GM12878 (cell line): ENCODE measurements at regions of chr1 and their contacts with region 1.

Region 1: GRCh38 chr1:205485338-205486228 is 18.9 kb upstream of the CDK18 start:
- DNase-seq: no peak
- ATAC-seq: peak; percentile 65
- H3K4me3 ChIP-seq: no peak overlapping the region
- H3K27ac ChIP-seq: no peak overlapping the region
- H3K4me1 ChIP-seq: peaks cover 14% of the 10 kb centered on the region
- H3K27me3 ChIP-seq: 0 out of 4 replicates have a peak, but pooled peaks cover 0 to 1% of the 10 kb centered on the region in 2 experiments
- CTCF ChIP-seq: peak; percentile 94 to 97 (median 96); a peak in 5 of 6 replicates
- EP300 ChIP-seq: no peak
- POLR2A ChIP-seq: no peak
- RAD21 ChIP-seq: peak; percentile 98

Region 2: GRCh38 chr1:205335643-205336091 is 149.9 kb before region 1 on chr1:
- CTCF ChIA-PET with region 1: interaction called, 102 read pairs
- POLR2A ChIA-PET with region 1: no interaction called
- RAD21 ChIA-PET with region 1: interaction called, 16 read pairs
- SMC1A ChIA-PET with region 1: interaction called, 39 read pairs
- in situ Hi-C with region 1: no loop called
- intact Hi-C with region 1: loop called (anchors 1 kb)
- DNase-seq: no peak
- ATAC-seq: peak; percentile 87
- H3K4me3 ChIP-seq: no peak overlapping the region
- H3K27ac ChIP-seq: no peak overlapping the region
- H3K4me1 ChIP-seq: peaks cover 6% of the 10 kb centered on the region; the same call in 1 of the 2 replicates
- H3K27me3 ChIP-seq: peaks cover 7 to 18% of the 10 kb centered on the region in 2 experiments
- CTCF ChIP-seq: peak; percentile 98 to 99 (median 99); a peak in 5 of 6 replicates
- EP300 ChIP-seq: no peak
- POLR2A ChIP-seq: no peak
- RAD21 ChIP-seq: peak; percentile 69

Region 3: GRCh38 chr1:205396967-205397616 is 88.5 kb before region 1 on chr1:
- CTCF ChIA-PET with region 1: interaction called, 420 read pairs
- POLR2A ChIA-PET with region 1: interaction called, 7 read pairs
- RAD21 ChIA-PET with region 1: interaction called, 214 read pairs
- SMC1A ChIA-PET with region 1: interaction called, 244 read pairs
- in situ Hi-C with region 1: loop called (anchors 5 kb)
- intact Hi-C with region 1: loop called (anchors 1 kb)
- DNase-seq: peak; percentile 8
- ATAC-seq: peak; percentile 65
- H3K4me3 ChIP-seq: no peak overlapping the region
- H3K27ac ChIP-seq: no peak overlapping the region
- H3K4me1 ChIP-seq: no peaks in the 10 kb centered on the region
- H3K27me3 ChIP-seq: no peaks in the 10 kb centered on the region
- CTCF ChIP-seq: peak; percentile 62 to 65 (median 65)
- EP300 ChIP-seq: no peak
- POLR2A ChIP-seq: no peak
- RAD21 ChIP-seq: peak; percentile 85

Region 4: GRCh38 chr1:205430696-205431305 is 54.8 kb before region 1 on chr1:
- CTCF ChIA-PET with region 1: interaction called, 191 read pairs
- POLR2A ChIA-PET with region 1: no interaction called
- RAD21 ChIA-PET with region 1: interaction called, 39 read pairs
- SMC1A ChIA-PET with region 1: interaction called, 21 read pairs
- in situ Hi-C with region 1: no loop called
- intact Hi-C with region 1: no loop called
- DNase-seq: peak; percentile 13
- ATAC-seq: peak; percentile 85
- H3K4me3 ChIP-seq: peak overlapping the region; percentile 54; the same call in 1 of the 2 replicates
- H3K27ac ChIP-seq: no peak overlapping the region
- H3K4me1 ChIP-seq: peaks cover 3% of the 10 kb centered on the region
- H3K27me3 ChIP-seq: peaks cover 3 to 4% of the 10 kb centered on the region in 2 experiments; a peak in 2 of 4 replicates
- CTCF ChIP-seq: peak; percentile 53 to 85 (median 72)
- EP300 ChIP-seq: peak in 1 of 2 experiments; percentile 38; a peak in 1 of 4 replicates
- POLR2A ChIP-seq: no peak
- RAD21 ChIP-seq: peak; percentile 45

Region 5: GRCh38 chr1:205504311-205504984 is 18.9 kb after region 1 on chr1 and contains the start of gene CDK18:
- CTCF ChIA-PET with region 1: interaction called, 891 read pairs
- POLR2A ChIA-PET with region 1: no interaction called
- RAD21 ChIA-PET with region 1: interaction called, 6 read pairs
- SMC1A ChIA-PET with region 1: interaction called, 42 read pairs
- in situ Hi-C with region 1: no loop called
- intact Hi-C with region 1: no loop called
- DNase-seq: no peak
- ATAC-seq: peak; percentile 80
- H3K4me3 ChIP-seq: peak within 1 kb of the TSS; percentile 71
- H3K27ac ChIP-seq: no peak within 1 kb of the TSS
- H3K4me1 ChIP-seq: 0 out of 2 replicates have a peak, but pooled peaks cover 4% of the 10 kb centered on the region
- H3K27me3 ChIP-seq: peaks cover 0 to 5% of the 10 kb centered on the region in 2 experiments; a peak in 3 of 4 replicates
- CTCF ChIP-seq: no peak
- EP300 ChIP-seq: no peak
- POLR2A ChIP-seq: no peak
- RAD21 ChIP-seq: no peak
- polyA plus RNA-seq, gene CDK18: not detected

Region 6: DNA sequence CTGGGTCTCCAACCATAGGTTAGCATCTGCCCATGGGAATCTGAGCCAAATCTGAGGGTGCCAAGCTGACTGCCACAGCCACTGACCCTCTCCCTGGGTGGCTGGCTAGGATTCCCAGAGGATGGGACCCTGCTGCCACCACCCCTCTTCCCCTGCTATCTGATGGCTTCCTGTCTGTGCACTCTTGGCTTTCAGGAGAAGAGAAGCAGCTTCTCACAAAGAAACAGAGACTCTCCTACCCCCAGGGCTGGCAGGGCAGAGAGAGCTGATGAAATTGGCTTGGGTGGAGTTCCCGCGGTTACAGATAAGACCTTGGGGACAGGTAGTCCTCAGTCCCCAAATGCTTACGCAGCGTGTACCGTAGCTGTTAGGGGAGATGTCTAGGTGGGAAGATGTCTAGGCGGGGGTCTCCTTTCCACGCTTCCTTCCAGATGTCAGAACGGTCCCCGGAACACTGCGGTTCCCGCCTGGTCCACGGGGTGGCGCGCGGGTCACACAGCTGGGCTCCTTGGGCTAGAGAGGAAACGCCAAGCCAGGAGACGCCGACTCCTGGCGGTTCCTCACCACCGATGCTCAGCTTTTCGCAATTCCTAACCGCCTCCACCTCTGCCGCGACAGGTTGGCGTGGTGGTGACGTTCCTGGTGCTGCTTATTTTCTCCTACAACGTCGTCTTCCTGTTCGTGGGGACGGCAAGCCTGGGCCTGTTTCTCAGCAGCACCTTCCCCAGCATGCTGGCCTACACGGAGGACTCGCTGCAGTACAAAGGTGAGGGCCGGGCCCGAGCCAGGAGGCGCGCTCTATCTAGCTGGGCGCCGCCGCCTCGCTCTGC is 106.2 kb after region 1 on chr1:
- CTCF ChIA-PET with region 1: interaction called, 38 read pairs
- POLR2A ChIA-PET with region 1: interaction called, 3 read pairs
- RAD21 ChIA-PET with region 1: interaction called, 16 read pairs
- SMC1A ChIA-PET with region 1: interaction called, 5 read pairs
- in situ Hi-C with region 1: no loop called
- intact Hi-C with region 1: no loop called
- DNase-seq: peak; percentile 59
- ATAC-seq: peak; percentile 79
- H3K4me3 ChIP-seq: peak overlapping the region; percentile 66; the same call in 1 of the 2 replicates
- H3K27ac ChIP-seq: peak overlapping the region; percentile 71
- H3K4me1 ChIP-seq: peaks cover 36% of the 10 kb centered on the region
- H3K27me3 ChIP-seq: no peaks in the 10 kb centered on the region
- CTCF ChIP-seq: peak; percentile 98 to 99 (median 99); a peak in 5 of 6 replicates
- EP300 ChIP-seq: no peak
- POLR2A ChIP-seq: peak; percentile 69
- RAD21 ChIP-seq: peak; percentile 96